HCT116 (cell line): ENCODE measurements at regions of chr3 and their contacts with region 1.

Region 1: GRCh38 chr3:122305818-122306621 is 19.0 kb upstream of the CSTA start:
- DNase-seq: peak; percentile 23
- ATAC-seq: peak; percentile 93
- H3K4me3 ChIP-seq: no peak overlapping the region
- H3K27ac ChIP-seq: no peak overlapping the region
- H3K4me1 ChIP-seq: 0 out of 4 replicates have a peak, but pooled peaks cover 0 to 3% of the 10 kb centered on the region in 2 experiments
- H3K27me3 ChIP-seq: no peaks in the 10 kb centered on the region
- CTCF ChIP-seq: peak; percentile 40 to 54 (median 49); a peak in 5 of 6 replicates
- POLR2A ChIP-seq: no peak
- RAD21 ChIP-seq: peak; percentile 63

Region 2: DNA sequence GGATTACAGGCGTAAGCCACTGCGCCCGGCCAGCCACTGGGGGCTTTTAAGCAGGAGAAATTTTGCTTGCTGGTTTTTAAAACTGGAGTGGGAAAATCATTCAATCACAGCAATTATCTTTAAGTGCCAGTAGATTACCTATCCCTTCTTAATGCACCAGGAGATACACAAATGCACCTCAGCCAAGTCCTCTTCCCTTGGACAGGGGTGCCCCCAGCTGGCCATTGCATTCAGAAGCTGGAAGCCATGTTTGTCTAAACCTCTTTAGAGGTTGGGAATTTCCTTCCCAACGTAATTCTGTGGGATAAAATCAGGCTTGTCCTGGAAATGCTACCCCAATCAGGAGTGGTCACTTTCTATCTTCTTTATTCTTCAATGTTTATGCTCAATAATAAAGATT is 50.4 kb after region 1 on chr3:
- CTCF ChIA-PET with region 1: interaction called, 14 read pairs
- POLR2A ChIA-PET with region 1: no interaction called
- RAD21 ChIA-PET with region 1: interaction called, 3 to 4 read pairs
- intact Hi-C with region 1: loop called (anchors 5 kb)
- DNase-seq: peak; percentile 34
- ATAC-seq: peak; percentile 78
- H3K4me3 ChIP-seq: no peak overlapping the region
- H3K27ac ChIP-seq: no peak overlapping the region
- H3K4me1 ChIP-seq: no peaks in the 10 kb centered on the region
- H3K27me3 ChIP-seq: no peaks in the 10 kb centered on the region
- CTCF ChIP-seq: peak; percentile 51 to 59 (median 55); a peak in 5 of 6 replicates
- POLR2A ChIP-seq: no peak
- RAD21 ChIP-seq: peak; percentile 81